ENCODE measurements at regions of chr12 and their contacts with region 1.

Region 1: GRCh38 chr12:89225808-89226411 is 126.4 kb downstream of the DUSP6 start:
- DNase-seq: no peak
- H3K4me3 Mint-ChIP-seq: peak overlapping the region; percentile 73
- H3K27ac Mint-ChIP-seq: peak overlapping the region; percentile 99
- H3K4me1 Mint-ChIP-seq: peaks cover 82% of the 10 kb centered on the region
- H3K27me3 Mint-ChIP-seq: no peaks in the 10 kb centered on the region

Region 2: GRCh38 chr12:88299567-88300101 is 926.3 kb before region 1 on chr12:
- intact Hi-C with region 1: loop called (anchors 2 kb)
- DNase-seq: peak; percentile 29
- H3K4me3 Mint-ChIP-seq: no peak overlapping the region
- H3K27ac Mint-ChIP-seq: peak overlapping the region; percentile 76
- H3K4me1 Mint-ChIP-seq: peaks cover 35% of the 10 kb centered on the region
- H3K27me3 Mint-ChIP-seq: no peaks in the 10 kb centered on the region

Region 3: GRCh38 chr12:89067421-89068187 is 158.3 kb before region 1 on chr12:
- intact Hi-C with region 1: loop called (anchors 5 kb)
- DNase-seq: no peak
- H3K4me3 Mint-ChIP-seq: no peak overlapping the region
- H3K27ac Mint-ChIP-seq: peak overlapping the region; percentile 20
- H3K4me1 Mint-ChIP-seq: peaks cover 46% of the 10 kb centered on the region
- H3K27me3 Mint-ChIP-seq: no peaks in the 10 kb centered on the region

Region 4: GRCh38 chr12:89179983-89180382 is 45.9 kb before region 1 on chr12:
- intact Hi-C with region 1: loop called (anchors 1 kb)
- DNase-seq: no peak
- H3K4me3 Mint-ChIP-seq: peak overlapping the region; percentile 48
- H3K27ac Mint-ChIP-seq: peak overlapping the region; percentile 95
- H3K4me1 Mint-ChIP-seq: peaks cover 62% of the 10 kb centered on the region
- H3K27me3 Mint-ChIP-seq: no peaks in the 10 kb centered on the region

Region 5: GRCh38 chr12:89280833-89281538 is 55.1 kb after region 1 on chr12:
- intact Hi-C with region 1: loop called (anchors 5 kb)
- DNase-seq: peak; percentile 8
- H3K4me3 Mint-ChIP-seq: peak overlapping the region; percentile 42
- H3K27ac Mint-ChIP-seq: peak overlapping the region; percentile 89
- H3K4me1 Mint-ChIP-seq: peaks cover 45% of the 10 kb centered on the region
- H3K27me3 Mint-ChIP-seq: no peaks in the 10 kb centered on the region

Region 6: GRCh38 chr12:89319122-89319521 is 93.2 kb after region 1 on chr12:
- intact Hi-C with region 1: no loop called
- DNase-seq: no peak
- H3K4me3 Mint-ChIP-seq: no peak overlapping the region
- H3K27ac Mint-ChIP-seq: no peak overlapping the region
- H3K4me1 Mint-ChIP-seq: peaks cover 26% of the 10 kb centered on the region
- H3K27me3 Mint-ChIP-seq: no peaks in the 10 kb centered on the region

Region 7: DNA sequence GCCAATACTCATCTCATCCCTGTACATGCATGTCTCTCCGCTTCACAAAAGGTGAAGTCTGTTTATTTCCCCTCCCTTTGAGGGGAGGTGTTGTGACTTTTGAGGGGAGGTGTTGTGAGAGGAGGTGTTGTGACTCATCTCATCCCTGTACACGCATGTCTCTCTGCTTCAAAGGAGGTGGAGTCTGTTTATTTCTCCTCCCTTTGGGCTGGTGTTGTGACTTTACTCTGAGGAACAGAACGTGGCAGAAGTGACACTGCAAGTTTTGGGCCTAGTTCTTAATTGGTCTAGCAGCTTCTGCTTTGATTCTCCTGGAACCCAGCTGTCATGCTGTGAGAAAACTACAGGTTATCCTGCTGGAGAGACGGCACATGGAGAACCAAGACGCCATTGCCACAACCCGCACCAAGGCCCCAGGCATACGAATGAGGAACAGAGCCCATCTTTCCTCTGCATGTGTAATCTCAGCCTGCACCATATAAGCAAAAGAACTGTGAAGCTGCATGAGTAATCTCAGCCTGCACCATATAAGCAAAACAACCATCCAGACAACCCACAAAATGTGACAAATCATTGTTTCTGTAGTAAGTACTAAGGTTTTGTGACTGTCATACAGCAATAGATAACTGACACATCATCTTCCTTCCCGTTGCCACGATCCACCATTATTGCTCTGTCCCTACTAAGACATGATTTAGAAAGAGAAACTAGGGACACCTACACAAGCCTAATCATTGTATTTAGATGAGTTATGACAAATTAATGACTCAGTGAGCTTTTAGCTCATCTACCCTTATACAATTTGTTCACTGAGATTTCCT is 268.7 kb after region 1 on chr12:
- intact Hi-C with region 1: loop called (anchors 1 kb)
- DNase-seq: peak; percentile 16
- H3K4me3 Mint-ChIP-seq: peak overlapping the region; percentile 50
- H3K27ac Mint-ChIP-seq: peak overlapping the region; percentile 92
- H3K4me1 Mint-ChIP-seq: peaks cover 34% of the 10 kb centered on the region
- H3K27me3 Mint-ChIP-seq: no peaks in the 10 kb centered on the region